Head of caudate nucleus (tissue), 42 donors: ENCODE measurements at regions of chr6 and their contacts with region 1.

Region 1: DNA sequence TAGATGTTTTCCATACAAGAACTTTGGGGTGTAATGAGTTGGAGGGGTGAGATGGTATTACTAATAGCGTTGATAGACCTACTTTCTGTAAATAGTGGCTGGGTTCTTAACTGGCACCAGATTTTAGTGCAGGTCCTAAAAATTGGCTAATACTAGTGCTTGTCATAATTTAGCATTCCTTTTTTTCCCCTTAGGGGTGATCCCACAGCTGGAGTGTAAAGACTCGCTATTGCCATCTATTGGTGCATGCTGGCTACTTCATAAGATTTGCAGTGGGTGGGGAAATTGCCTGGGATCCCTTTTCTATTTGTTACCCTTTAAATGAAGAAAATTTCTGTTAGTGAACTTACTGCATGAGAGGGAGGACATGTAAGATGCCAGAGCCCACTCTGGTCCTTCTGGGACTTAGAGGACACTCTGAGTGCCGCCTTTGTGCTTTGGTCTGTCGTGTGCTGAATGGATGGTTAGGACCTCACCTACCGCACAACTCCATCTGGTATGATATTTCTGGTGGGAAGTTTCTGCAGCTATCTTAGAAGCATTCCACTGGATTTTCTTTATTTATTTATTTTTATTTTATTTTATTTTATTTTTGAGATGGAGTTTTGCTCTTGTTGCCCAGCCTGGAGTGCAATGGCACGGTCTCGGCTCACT is 195.5 kb downstream of the JARID2 start:
- DNase-seq: peak in 27 of 42 donors; percentile 10 to 82 (median 53)

Region 2: DNA sequence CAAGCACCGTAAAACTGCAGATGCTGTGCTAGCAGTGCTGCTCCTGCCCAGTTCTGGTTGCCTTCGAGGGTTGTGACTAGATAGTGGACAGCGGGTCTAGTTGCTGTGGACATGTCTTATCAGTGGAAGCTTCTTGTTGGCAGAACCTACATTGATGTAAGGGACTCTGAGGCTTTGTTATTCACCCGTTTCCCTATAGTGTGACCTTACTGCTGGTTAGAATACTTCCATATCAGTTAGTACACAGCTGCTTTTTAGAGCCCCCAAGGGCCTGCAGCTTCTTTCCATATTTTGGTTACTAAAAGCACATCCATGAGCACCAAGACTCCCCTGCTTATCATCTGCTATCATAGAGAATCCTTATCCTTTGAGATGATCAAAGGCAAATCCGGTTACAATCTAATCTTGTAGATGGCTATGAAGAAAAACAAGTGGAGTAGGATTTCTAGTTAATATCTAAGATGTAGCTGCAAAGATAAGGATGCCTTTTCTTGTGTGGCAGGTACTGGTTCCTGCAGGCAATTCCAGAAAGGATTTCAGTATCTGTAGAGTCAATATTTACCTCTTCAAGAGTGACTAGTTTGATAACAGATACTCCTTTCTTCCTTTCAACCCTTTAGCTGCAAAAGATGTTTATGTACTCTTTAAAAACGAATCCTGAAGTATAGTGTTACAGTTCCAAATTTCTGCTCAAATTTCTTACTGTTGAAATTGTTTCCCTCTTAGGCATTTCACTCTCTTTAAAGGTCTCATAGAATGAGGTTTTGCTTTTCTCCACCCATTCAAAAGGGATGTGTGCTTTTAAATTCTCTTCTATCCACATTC is 31.8 kb before region 1 on chr6:
- intact Hi-C with region 1: loop called (anchors 5 kb)
- DNase-seq: no peak